H1 (cell line): ENCODE measurements at regions of chr5 and their contacts with region 1.

Region 1: GRCh38 chr5:61768692-61769281 is 436.7 kb downstream of the ZSWIM6 start:
- DNase-seq: peak; percentile 23 to 65
- H3K4me3 ChIP-seq: no peak overlapping the region
- H3K27ac ChIP-seq: no peak overlapping the region
- H3K4me1 ChIP-seq: no peaks in the 10 kb centered on the region
- H3K27me3 ChIP-seq: no peaks in the 10 kb centered on the region
- CTCF ChIP-seq: peak; percentile 99 to 100 (median 100)
- EP300 ChIP-seq: no peak
- POLR2A ChIP-seq: no peak
- RAD21 ChIP-seq: peak; percentile 77 to 84

Region 2: DNA sequence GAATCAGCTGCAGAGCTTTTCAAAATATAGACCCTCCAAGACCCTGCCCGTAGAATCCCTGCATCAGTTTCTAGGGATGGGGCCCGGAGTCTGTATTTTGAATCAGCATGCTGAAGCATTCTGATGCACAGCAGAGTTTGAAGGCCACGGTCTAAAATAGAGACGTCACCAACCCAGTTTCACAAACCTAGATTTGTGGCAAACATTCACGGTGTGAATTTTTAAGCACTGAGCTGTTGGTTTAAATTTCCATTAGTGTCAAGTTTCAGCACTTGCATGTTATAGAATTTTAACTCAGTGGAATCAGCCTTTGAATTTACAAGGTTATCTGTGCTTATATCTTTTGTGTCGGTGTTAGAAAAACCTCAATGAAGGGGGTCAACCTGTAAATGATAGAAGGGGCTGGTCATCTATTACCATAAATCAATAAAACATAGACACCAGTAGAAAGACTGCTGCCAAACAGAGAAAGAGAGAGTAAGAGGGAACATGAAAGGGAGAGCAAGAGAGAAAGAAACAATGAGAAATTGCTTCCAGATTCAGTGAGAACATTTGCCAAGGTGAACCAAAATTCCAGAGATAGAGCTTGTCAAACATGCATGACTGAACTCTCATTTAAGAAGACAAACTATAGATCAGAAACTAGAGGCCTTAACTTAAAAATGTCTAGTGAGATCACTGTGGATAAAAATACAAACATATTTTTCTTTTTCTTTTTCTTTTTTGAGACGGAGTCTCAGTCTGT is 21.8 kb before region 1 on chr5:
- CTCF ChIA-PET with region 1: interaction called, 80 read pairs
- POLR2A ChIA-PET with region 1: interaction called, 3 read pairs
- DNase-seq: no peak
- H3K4me3 ChIP-seq: no peak overlapping the region
- H3K27ac ChIP-seq: no peak overlapping the region
- H3K4me1 ChIP-seq: no peaks in the 10 kb centered on the region
- H3K27me3 ChIP-seq: no peaks in the 10 kb centered on the region
- CTCF ChIP-seq: no peak
- EP300 ChIP-seq: no peak
- POLR2A ChIP-seq: no peak
- RAD21 ChIP-seq: no peak

Region 3: GRCh38 chr5:61755726-61756222 is 13.0 kb before region 1 on chr5:
- CTCF ChIA-PET with region 1: interaction called, 80 read pairs
- POLR2A ChIA-PET with region 1: interaction called, 3 read pairs
- DNase-seq: no peak
- H3K4me3 ChIP-seq: no peak overlapping the region
- H3K27ac ChIP-seq: no peak overlapping the region
- H3K4me1 ChIP-seq: no peaks in the 10 kb centered on the region; a peak in 1 of 7 replicates
- H3K27me3 ChIP-seq: no peaks in the 10 kb centered on the region
- CTCF ChIP-seq: no peak
- EP300 ChIP-seq: no peak
- POLR2A ChIP-seq: no peak
- RAD21 ChIP-seq: no peak

Region 4: DNA sequence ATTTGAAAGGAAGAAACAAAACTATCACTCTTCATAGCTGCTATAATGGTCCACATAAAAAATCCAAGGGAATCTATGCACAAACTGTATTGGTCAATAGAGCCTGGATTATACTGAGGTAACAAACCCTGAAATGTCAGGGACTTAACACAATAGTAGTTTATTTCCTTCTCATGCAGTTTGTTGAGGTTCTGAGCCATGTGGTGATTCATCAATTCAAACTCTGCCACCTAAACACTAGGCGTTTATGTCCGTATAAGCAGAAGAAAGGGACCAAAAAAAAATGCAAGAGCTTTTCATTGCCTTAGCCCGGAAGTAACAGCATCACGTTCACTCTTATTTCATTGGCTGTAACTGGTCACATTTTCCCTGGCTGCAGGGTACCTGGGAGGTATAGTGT is 28.0 kb after region 1 on chr5:
- CTCF ChIA-PET with region 1: interaction called, 21 read pairs
- POLR2A ChIA-PET with region 1: no interaction called
- DNase-seq: no peak
- H3K4me3 ChIP-seq: no peak overlapping the region
- H3K27ac ChIP-seq: no peak overlapping the region
- H3K4me1 ChIP-seq: no peaks in the 10 kb centered on the region; a peak in 1 of 7 replicates
- H3K27me3 ChIP-seq: no peaks in the 10 kb centered on the region
- CTCF ChIP-seq: no peak
- EP300 ChIP-seq: no peak
- POLR2A ChIP-seq: no peak
- RAD21 ChIP-seq: no peak

Region 5: GRCh38 chr5:61805101-61805500 is 36.3 kb after region 1 on chr5:
- CTCF ChIA-PET with region 1: interaction called, 35 read pairs
- POLR2A ChIA-PET with region 1: no interaction called
- DNase-seq: no peak
- H3K4me3 ChIP-seq: no peak overlapping the region
- H3K27ac ChIP-seq: no peak overlapping the region
- H3K4me1 ChIP-seq: no peaks in the 10 kb centered on the region
- H3K27me3 ChIP-seq: no peaks in the 10 kb centered on the region; a peak in 1 of 7 replicates
- CTCF ChIP-seq: no peak
- EP300 ChIP-seq: no peak
- POLR2A ChIP-seq: no peak
- RAD21 ChIP-seq: no peak

Region 6: DNA sequence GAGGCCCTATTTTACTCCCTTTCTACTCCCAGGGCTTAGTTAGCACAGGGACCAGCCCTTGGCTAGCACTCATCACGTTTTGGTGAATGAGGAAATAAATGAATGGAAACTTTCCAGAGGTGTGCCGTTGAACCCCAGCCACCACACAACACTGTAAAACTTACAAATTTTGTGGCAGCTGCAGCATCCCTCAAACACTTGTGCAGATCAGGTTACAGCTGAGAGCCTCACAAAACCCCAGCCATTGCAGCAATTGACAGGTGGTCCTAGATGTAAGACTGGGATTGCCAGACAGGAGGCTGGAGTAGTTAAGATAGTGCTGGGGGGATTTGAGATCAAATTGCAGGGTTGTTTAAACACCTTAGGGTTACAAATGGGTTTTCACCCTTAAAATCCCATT is 55.0 kb after region 1 on chr5:
- CTCF ChIA-PET with region 1: interaction called, 11 read pairs
- POLR2A ChIA-PET with region 1: no interaction called
- DNase-seq: no peak
- H3K4me3 ChIP-seq: no peak overlapping the region
- H3K27ac ChIP-seq: no peak overlapping the region
- H3K4me1 ChIP-seq: peaks cover 0 to 3% (median 1%) of the 10 kb centered on the region in 4 experiments; a peak in 3 of 7 replicates
- H3K27me3 ChIP-seq: no peaks in the 10 kb centered on the region
- CTCF ChIP-seq: no peak
- EP300 ChIP-seq: no peak
- POLR2A ChIP-seq: no peak
- RAD21 ChIP-seq: no peak